Common myeloid progenitor, CD34-positive (primary cell): ENCODE measurements at regions of chr11 and their contacts with region 1.

Region 1: DNA sequence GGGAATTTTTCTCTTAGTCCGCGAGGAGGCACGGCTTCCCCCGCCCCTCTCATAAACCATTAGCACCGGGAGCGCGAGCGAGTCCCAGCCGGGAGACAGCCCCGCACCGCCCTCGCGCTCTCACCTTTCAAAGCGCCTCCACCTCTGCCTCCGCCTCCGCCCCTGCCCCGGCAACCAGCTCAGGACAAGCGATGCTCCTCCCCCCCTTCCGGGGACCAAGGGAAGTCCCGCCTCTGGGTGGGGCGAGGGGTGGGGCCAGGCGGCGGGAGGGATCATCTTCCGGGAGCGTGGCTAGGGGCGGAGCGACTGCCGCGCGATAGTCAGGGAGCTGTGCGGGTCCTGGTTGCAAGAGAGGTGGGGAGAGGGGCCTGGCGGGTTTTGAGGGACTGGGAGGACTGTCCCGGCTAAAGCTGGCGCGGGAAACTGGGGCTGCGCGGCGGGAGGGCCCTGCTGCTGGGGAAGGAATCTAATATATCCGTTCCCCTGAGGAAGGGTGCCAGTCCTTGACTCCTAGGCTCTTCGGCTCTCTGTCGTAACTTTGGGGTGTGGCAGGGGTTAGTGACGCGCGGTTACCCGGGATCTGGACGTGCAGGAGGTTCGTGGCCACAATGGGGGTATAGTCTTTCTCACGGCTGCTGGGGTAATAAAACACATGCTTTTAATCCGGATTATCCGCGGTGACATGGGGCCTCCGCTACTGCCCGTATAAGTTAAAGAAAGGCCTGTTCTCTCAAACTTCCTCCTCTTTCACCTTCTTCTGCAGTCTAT is at the starts of genes CCDC82 and JRKL:
- DNase-seq: peak; percentile 93 to 96 (median 96)
- H3K4me3 ChIP-seq: peak within 1 kb of the TSS; percentile 81 to 99 (median 94)
- H3K27ac ChIP-seq: peak within 1 kb of the TSS; percentile 82 to 92
- H3K4me1 ChIP-seq: peaks cover 12 to 19% (median 18%) of the 10 kb centered on the region in 4 experiments
- H3K27me3 ChIP-seq: no peaks in the 10 kb centered on the region

Region 2: GRCh38 chr11:95835768-95836488 is 554.0 kb before region 1 on chr11:
- CTCF ChIA-PET with region 1: interaction called, 12 read pairs
- POLR2A ChIA-PET with region 1: no interaction called
- DNase-seq: peak; percentile 60 to 77 (median 74)
- H3K4me3 ChIP-seq: no peak overlapping the region
- H3K27ac ChIP-seq: no peak overlapping the region
- H3K4me1 ChIP-seq: no peaks in the 10 kb centered on the region
- H3K27me3 ChIP-seq: no peaks in the 10 kb centered on the region

Region 3: GRCh38 chr11:96331699-96332116 is 58.2 kb before region 1 on chr11:
- CTCF ChIA-PET with region 1: no interaction called
- POLR2A ChIA-PET with region 1: no interaction called
- DNase-seq: no peak
- H3K4me3 ChIP-seq: no peak overlapping the region
- H3K27ac ChIP-seq: no peak overlapping the region
- H3K4me1 ChIP-seq: peaks cover 0 to 5% (median under 1%) of the 10 kb centered on the region in 4 experiments
- H3K27me3 ChIP-seq: no peaks in the 10 kb centered on the region

Region 4: DNA sequence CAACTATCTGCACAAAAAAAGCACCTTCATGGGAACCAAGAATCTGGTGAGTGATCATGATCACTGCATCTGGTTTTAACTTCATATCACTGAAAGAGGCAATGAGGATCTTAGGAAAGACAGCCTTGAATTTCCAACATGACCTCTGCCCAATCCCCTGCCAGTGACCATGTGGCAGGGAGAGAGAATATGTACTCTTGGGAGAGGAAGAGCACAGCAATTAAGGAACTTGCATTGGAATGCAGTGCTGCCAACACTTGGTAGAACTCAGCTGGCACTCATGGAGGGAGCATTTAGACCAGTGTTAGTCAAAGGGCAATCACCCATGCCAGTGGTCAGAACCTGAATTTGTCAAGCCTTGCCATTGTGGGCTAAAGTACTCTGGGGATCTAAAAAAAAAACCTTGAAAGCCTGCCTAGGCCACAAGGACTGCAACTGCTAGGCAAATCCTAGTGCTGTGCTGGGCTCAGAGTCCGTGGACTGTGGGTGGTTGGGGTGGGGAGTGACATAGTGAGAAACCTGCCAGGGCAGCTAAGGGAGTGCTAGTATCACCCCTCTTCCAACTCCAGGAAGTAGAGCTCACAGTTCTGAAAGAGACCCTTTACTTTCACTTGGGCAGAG is 23.0 kb after region 1 on chr11:
- CTCF ChIA-PET with region 1: no interaction called
- POLR2A ChIA-PET with region 1: no interaction called
- DNase-seq: no peak
- H3K4me3 ChIP-seq: no peak overlapping the region
- H3K27ac ChIP-seq: no peak overlapping the region
- H3K4me1 ChIP-seq: no peaks in the 10 kb centered on the region
- H3K27me3 ChIP-seq: no peaks in the 10 kb centered on the region

Region 5: DNA sequence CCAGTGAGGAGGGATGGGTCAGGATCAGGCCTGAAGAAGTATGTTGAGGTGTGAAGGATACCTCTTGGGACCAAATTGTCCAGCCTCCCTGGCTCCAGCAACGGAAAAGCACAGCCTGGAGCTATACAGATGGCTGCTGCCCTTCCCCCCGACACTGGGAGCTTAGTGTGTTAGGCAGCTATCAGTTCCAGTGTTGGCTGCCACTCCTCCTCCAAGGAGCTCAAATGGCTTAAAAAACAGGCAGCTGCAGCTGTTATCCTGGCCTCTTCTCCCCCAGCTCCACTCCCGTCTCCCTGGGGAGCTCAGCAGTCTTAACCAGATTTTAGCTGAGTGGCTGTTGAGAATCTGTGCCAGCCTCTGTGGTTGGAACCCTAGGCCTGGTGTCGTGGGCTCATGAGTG is 224.9 kb after region 1 on chr11:
- CTCF ChIA-PET with region 1: no interaction called
- POLR2A ChIA-PET with region 1: no interaction called
- DNase-seq: no peak
- H3K4me3 ChIP-seq: no peak overlapping the region
- H3K27ac ChIP-seq: no peak overlapping the region
- H3K4me1 ChIP-seq: no peaks in the 10 kb centered on the region
- H3K27me3 ChIP-seq: no peaks in the 10 kb centered on the region